T-cell (primary cell): ENCODE measurements at regions of chr11 and their contacts with region 1.

Region 1: GRCh38 chr11:63838678-63839507 is at the start of gene MARK2:
- DNase-seq: peak; percentile 97 to 100 (median 100)
- ATAC-seq: peak; percentile 85 to 89 (median 86)
- H3K4me3 ChIP-seq: peak within 1 kb of the TSS; percentile 92 to 95
- H3K4me3 Mint-ChIP-seq: peak within 1 kb of the TSS; percentile 87 to 94 (median 87)
- H3K27ac ChIP-seq: peak within 1 kb of the TSS; percentile 61
- H3K27ac Mint-ChIP-seq: peak within 1 kb of the TSS; percentile 91 to 92
- H3K4me1 ChIP-seq: peaks cover 29 to 53% of the 10 kb centered on the region in 2 experiments
- H3K4me1 Mint-ChIP-seq: peaks cover 52 to 59% (median 58%) of the 10 kb centered on the region in 3 donors
- H3K27me3 ChIP-seq: no peaks in the 10 kb centered on the region
- H3K27me3 Mint-ChIP-seq: no peaks in the 10 kb centered on the region
- total RNA-seq, gene MARK2: 57.4 to 67.2 (median 64.0) TPM

Region 2: GRCh38 chr11:63813035-63813562 is 25.8 kb before region 1 on chr11 and contains the start of gene SPINDOC:
- CTCF ChIA-PET with region 1: no interaction called
- POLR2A ChIA-PET with region 1: no interaction called
- DNase-seq: peak; percentile 13 to 78 (median 45)
- ATAC-seq: peak; percentile 91 to 96 (median 92)
- H3K4me3 ChIP-seq: peak within 1 kb of the TSS; percentile 84 to 93
- H3K4me3 Mint-ChIP-seq: peak within 1 kb of the TSS; percentile 73 to 82 (median 76)
- H3K27ac ChIP-seq: peak within 1 kb of the TSS; percentile 41
- H3K27ac Mint-ChIP-seq: peak within 1 kb of the TSS; percentile 30 to 36
- H3K4me1 ChIP-seq: peaks cover 7 to 20% of the 10 kb centered on the region in 2 experiments
- H3K4me1 Mint-ChIP-seq: peaks cover 16 to 23% (median 23%) of the 10 kb centered on the region in 3 donors
- H3K27me3 ChIP-seq: no peaks in the 10 kb centered on the region
- H3K27me3 Mint-ChIP-seq: no peaks in the 10 kb centered on the region
- total RNA-seq, gene SPINDOC: 8.1 to 16.1 (median 15.3) TPM

Region 3: GRCh38 chr11:63871962-63872799 is 33.3 kb after region 1 on chr11:
- CTCF ChIA-PET with region 1: interaction called in 1 of 2 experiments, 10 read pairs
- POLR2A ChIA-PET with region 1: no interaction called
- DNase-seq: peak in 28 of 35 experiments; percentile 12 to 67 (median 32)
- ATAC-seq: peak; percentile 48 to 72 (median 54)
- H3K4me3 ChIP-seq: no peak overlapping the region
- H3K4me3 Mint-ChIP-seq: peak overlapping the region in 1 of 3 donors; percentile 55
- H3K27ac ChIP-seq: peak overlapping the region; percentile 14
- H3K27ac Mint-ChIP-seq: peak overlapping the region; percentile 73 to 79
- H3K4me1 ChIP-seq: peaks cover 63 to 75% of the 10 kb centered on the region in 2 experiments
- H3K4me1 Mint-ChIP-seq: peaks cover 65 to 87% (median 85%) of the 10 kb centered on the region in 3 donors
- H3K27me3 ChIP-seq: no peaks in the 10 kb centered on the region
- H3K27me3 Mint-ChIP-seq: no peaks in the 10 kb centered on the region

Region 4: DNA sequence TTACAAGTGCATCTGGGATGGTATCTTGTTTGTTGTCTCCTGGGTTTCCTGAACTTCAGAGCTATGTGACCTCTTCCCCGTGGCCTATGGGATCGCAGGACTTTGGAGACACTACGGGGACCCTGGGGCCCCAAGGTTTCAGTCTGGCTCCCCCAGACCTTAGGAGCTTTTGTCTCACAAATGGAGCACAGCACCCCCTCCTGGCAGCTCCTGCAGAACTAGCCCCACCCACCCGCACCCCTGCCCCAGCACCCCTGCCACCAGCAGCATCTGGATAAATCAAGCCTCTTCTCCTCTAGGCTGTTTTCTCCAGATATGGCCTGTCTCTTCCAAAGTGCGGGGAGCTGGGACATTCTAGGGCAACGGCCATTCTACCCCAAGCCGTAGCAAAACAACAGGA is 67.7 kb after region 1 on chr11:
- CTCF ChIA-PET with region 1: interaction called, 8 to 19 read pairs
- POLR2A ChIA-PET with region 1: no interaction called
- DNase-seq: peak in 34 of 35 experiments; percentile 28 to 76 (median 57)
- ATAC-seq: peak; percentile 55 to 85 (median 60)
- H3K4me3 ChIP-seq: no peak overlapping the region
- H3K4me3 Mint-ChIP-seq: no peak overlapping the region
- H3K27ac ChIP-seq: no peak overlapping the region
- H3K27ac Mint-ChIP-seq: peak overlapping the region; percentile 39 to 61
- H3K4me1 ChIP-seq: peaks cover 0 to 2% of the 10 kb centered on the region in 2 experiments
- H3K4me1 Mint-ChIP-seq: peaks cover 2 to 9% (median 4%) of the 10 kb centered on the region in 3 donors
- H3K27me3 ChIP-seq: no peaks in the 10 kb centered on the region
- H3K27me3 Mint-ChIP-seq: no peaks in the 10 kb centered on the region

Region 5: DNA sequence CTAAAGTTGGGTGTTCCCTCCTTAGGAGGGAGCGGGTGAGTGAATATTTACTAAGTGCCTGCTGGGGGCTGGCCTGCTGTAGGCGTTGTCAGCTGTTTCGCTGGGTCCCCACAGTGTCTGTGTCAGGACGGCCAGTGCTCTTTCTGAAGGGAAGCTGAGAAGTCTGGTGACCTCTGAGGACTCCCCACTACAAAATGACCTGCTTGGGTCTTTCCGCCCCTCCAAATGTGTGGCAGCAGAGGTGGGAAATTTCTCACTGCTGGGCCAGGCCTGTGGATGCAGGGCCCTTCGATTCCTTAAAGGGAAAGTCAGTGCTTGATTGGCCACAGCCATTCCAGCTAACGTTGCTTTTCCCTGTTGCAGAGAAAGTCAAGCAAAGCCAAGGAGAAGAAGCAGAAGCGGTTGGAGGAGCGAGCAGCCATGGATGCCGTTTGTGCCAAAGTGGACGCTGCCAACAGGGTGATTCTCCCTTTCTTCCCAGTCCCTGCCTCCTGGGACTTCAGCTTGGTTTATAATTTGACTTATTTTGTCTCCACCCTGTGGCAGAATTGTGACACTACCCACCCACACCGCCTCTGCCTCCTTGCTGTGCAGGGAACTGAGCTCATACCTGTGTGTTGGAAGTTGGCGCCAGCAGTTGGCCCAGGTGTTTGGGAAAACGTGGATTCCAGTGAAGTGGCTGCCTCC is 106.7 kb after region 1 on chr11:
- CTCF ChIA-PET with region 1: interaction called, 17 to 31 read pairs
- POLR2A ChIA-PET with region 1: no interaction called
- DNase-seq: peak in 30 of 35 experiments; percentile 18 to 71 (median 33)
- ATAC-seq: peak; percentile 74 to 87 (median 82)
- H3K4me3 ChIP-seq: no peak overlapping the region
- H3K4me3 Mint-ChIP-seq: no peak overlapping the region
- H3K27ac ChIP-seq: no peak overlapping the region
- H3K27ac Mint-ChIP-seq: no peak overlapping the region
- H3K4me1 ChIP-seq: peaks cover 0 to 12% of the 10 kb centered on the region in 2 experiments
- H3K4me1 Mint-ChIP-seq: peaks cover 2 to 11% (median 8%) of the 10 kb centered on the region in 3 donors
- H3K27me3 ChIP-seq: no peaks in the 10 kb centered on the region
- H3K27me3 Mint-ChIP-seq: no peaks in the 10 kb centered on the region